Endothelial cell of umbilical vein (primary cell): ENCODE measurements at regions of chr1 and their contacts with region 1.

Region 1: DNA sequence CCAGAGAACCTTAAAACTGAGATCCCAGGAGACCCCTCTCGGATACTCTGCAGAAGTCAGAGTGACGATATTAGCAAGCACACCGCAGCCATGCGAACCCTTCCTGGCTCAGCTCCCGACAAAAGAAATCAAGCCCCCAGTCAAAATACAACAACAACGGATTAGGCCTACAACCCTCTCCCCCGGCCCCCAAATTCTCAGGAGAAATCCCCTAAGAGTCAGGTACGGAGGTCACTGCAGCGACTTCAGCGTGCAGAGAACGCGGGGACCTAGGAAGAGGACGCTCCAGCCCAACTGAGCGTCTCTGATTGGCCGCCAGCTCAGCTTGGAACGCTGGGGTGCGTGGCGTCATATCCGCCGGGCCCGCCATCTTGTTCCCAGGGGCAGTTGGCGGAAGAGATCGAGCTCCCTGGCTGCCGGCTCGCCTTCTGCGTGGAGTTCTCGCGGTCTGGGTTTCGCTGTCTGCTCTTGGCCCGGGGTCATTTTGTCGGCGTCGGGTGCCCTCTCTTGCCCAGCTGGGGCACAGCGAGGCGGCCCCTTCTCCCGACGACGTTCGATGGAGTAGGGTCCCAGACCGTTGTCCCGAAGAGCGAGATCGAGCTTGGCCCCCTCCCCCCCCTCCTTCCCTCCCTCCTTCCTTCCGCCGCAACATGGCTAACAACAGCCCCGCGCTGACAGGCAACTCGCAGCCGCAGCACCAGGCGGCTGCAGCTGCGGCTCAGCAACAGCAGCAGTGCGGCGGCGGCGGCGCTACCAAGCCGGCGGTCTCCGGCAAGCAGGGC is at the start of gene PRPF38B:
- DNase-seq: peak; percentile 93
- H3K4me3 ChIP-seq: peak within 1 kb of the TSS; percentile 83 to 94 (median 89)
- H3K27ac ChIP-seq: peak within 1 kb of the TSS; percentile 94
- H3K4me1 ChIP-seq: peaks cover 23% of the 10 kb centered on the region
- H3K27me3 ChIP-seq: no peaks in the 10 kb centered on the region
- CTCF ChIP-seq: no peak
- POLR2A ChIP-seq: peak; percentile 97
- total RNA-seq, gene PRPF38B: 40.5 and 46.6 TPM in 2 replicates

Region 2: GRCh38 chr1:108314815-108315214 is 377.3 kb before region 1 on chr1:
- CTCF ChIA-PET with region 1: no interaction called
- POLR2A ChIA-PET with region 1: no interaction called
- dilution Hi-C with region 1: no loop called
- intact Hi-C with region 1: no loop called
- DNase-seq: no peak
- H3K4me3 ChIP-seq: no peak overlapping the region
- H3K27ac ChIP-seq: no peak overlapping the region
- H3K4me1 ChIP-seq: no peaks in the 10 kb centered on the region
- H3K27me3 ChIP-seq: peaks cover 0 to 4% of the 10 kb centered on the region in 2 experiments
- CTCF ChIP-seq: no peak
- POLR2A ChIP-seq: no peak

Region 3: DNA sequence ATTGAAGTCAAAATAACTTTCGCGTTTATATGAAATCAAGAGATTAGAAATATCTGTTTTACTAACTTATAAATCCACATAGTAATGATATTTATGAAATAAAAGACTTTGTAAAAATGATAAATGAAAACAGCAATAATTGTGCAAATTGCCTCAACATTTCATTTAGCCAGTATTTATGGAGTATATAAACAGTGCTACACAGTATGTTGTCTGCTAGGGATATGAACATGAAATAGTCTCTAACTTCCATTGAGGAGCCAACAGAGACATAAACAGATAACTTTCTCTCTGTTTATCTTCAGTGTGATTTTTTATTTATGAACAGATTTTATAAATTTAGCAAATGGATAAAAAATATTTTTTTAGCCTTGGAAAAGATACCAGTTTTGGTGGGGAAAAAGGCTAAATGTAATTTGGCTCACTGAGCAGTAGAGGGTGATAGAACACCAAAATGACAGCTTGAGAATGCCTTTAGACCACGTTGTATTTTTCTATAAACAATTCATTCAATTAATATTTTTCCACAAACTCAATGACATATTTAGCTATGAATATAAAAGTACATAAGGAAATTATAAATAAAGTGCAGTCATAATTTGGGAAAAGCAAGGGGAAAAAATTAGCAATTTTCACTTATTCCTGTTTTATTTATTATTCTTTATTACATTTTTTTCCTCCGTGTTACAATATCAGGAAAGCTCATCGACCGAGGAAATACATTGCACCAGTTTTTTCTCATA is 179.7 kb before region 1 on chr1:
- CTCF ChIA-PET with region 1: interaction called, 7 read pairs
- POLR2A ChIA-PET with region 1: no interaction called
- dilution Hi-C with region 1: no loop called
- intact Hi-C with region 1: loop called (anchors 5 kb)
- DNase-seq: peak; percentile 39
- H3K4me3 ChIP-seq: no peak overlapping the region
- H3K27ac ChIP-seq: no peak overlapping the region
- H3K4me1 ChIP-seq: no peaks in the 10 kb centered on the region
- H3K27me3 ChIP-seq: peaks cover 2 to 9% of the 10 kb centered on the region in 2 experiments
- CTCF ChIP-seq: peak; percentile 43 to 53
- POLR2A ChIP-seq: no peak

Region 4: GRCh38 chr1:108590957-108591356 is 101.2 kb before region 1 on chr1:
- CTCF ChIA-PET with region 1: interaction called, 3 read pairs
- POLR2A ChIA-PET with region 1: no interaction called
- dilution Hi-C with region 1: no loop called
- intact Hi-C with region 1: loop called (anchors 2 kb)
- DNase-seq: peak; percentile 97
- H3K4me3 ChIP-seq: peak overlapping the region in 1 of 3 experiments; percentile 31
- H3K27ac ChIP-seq: peak overlapping the region; percentile 94
- H3K4me1 ChIP-seq: peaks cover 39% of the 10 kb centered on the region
- H3K27me3 ChIP-seq: no peaks in the 10 kb centered on the region
- CTCF ChIP-seq: no peak
- POLR2A ChIP-seq: no peak

Region 5: DNA sequence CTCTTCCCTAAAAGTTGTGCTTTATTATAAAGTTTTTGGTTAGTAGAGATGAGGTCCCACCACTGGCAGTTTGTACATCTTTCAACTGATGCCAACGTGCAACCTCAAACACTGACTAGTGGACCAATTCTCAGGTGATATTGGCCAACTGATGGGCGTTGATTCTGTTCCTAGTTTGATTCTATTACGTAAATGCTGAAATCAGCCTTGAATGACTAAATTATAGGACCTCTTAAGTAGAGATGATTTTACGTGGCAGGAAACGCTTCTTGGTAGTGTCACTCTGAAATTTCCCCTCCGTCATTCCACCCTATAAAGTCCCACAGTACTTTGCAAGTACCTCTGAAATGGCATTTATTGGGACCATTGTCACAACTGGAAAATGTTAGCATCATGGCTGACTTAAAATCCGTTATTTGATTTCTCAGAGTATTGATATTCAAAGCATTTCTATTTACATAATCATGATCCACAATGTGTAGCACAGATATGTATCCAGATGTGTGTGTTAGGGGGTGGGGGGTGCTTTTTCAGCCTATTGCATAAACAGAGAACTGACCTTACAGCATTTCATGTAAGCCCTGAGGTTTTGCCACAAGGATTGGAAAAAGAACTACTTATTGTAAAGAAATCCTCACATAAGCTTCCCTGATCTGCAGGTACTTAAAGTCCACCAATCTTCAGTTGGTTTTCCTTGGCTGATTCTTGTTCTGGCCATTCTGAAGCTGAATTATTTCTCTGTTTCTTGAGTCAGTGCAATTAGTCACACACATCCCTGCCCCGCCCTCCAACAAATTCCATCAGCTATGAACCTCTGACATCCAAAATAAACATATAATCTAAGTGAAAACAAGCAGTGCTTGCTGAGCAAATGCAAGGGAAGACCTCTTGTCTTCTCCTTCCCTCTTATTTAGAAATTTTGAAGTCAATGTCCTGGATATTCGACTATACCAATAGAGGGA is 12.1 kb after region 1 on chr1:
- CTCF ChIA-PET with region 1: interaction called, 6 read pairs
- POLR2A ChIA-PET with region 1: interaction called, 8 read pairs
- dilution Hi-C with region 1: no loop called
- intact Hi-C with region 1: loop called (anchors 1 kb)
- DNase-seq: peak; percentile 66
- H3K4me3 ChIP-seq: no peak overlapping the region
- H3K27ac ChIP-seq: no peak overlapping the region
- H3K4me1 ChIP-seq: peaks cover 12% of the 10 kb centered on the region
- H3K27me3 ChIP-seq: no peaks in the 10 kb centered on the region
- CTCF ChIP-seq: no peak
- POLR2A ChIP-seq: no peak

Region 6: GRCh38 chr1:108816049-108816893 is 124.1 kb after region 1 on chr1:
- CTCF ChIA-PET with region 1: no interaction called
- POLR2A ChIA-PET with region 1: no interaction called
- dilution Hi-C with region 1: no loop called
- intact Hi-C with region 1: loop called (anchors 2 kb)
- DNase-seq: peak; percentile 98
- H3K4me3 ChIP-seq: peak overlapping the region in 1 of 3 experiments; percentile 17
- H3K27ac ChIP-seq: peak overlapping the region; percentile 91
- H3K4me1 ChIP-seq: peaks cover 12% of the 10 kb centered on the region
- H3K27me3 ChIP-seq: no peaks in the 10 kb centered on the region
- CTCF ChIP-seq: no peak
- POLR2A ChIP-seq: peak; percentile 42

Region 7: DNA sequence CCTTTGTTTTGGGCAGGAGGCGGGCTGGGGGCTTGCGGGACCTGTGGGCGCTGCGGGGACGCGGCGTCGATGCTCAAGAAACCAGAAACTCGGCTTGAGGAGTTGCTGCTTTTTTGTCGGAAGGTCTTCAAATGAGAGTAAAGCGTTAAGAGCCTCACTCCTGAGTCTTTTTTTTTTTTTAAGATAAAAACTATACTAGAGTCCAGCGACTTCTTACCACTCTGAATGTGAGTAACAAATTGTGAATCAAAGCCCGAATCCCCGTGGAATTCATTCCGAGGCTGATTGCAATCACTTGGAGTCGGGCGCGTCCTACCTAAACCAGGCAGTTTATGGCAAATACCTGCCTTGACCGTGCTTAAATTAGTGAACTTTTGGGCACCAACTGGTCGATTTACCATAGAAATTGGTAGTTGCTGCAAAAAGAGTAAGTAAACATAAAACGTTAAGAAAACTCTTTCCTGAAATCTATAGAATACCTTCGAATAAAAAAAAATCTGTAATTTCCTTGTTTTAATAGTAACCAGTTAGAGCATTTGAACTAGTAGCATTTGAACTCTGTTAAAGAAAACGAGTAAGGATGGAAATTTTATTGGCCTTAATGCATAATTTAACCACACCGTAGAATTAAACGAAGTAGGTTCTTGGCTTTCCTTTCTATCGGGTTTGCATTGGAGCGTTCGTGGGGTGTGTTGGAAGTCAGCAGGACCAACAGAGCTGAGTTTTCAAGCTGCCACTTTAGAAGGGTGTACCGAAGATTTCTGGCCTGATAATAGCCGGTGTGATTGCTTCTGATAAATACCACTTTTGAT is 185.4 kb after region 1 on chr1:
- CTCF ChIA-PET with region 1: no interaction called
- POLR2A ChIA-PET with region 1: no interaction called
- dilution Hi-C with region 1: no loop called
- intact Hi-C with region 1: loop called (anchors 5 kb)
- DNase-seq: peak; percentile 55
- H3K4me3 ChIP-seq: peak overlapping the region; percentile 90 to 99 (median 93)
- H3K27ac ChIP-seq: peak overlapping the region; percentile 13
- H3K4me1 ChIP-seq: peaks cover 11% of the 10 kb centered on the region
- H3K27me3 ChIP-seq: no peaks in the 10 kb centered on the region
- CTCF ChIP-seq: no peak
- POLR2A ChIP-seq: no peak

Region 8: DNA sequence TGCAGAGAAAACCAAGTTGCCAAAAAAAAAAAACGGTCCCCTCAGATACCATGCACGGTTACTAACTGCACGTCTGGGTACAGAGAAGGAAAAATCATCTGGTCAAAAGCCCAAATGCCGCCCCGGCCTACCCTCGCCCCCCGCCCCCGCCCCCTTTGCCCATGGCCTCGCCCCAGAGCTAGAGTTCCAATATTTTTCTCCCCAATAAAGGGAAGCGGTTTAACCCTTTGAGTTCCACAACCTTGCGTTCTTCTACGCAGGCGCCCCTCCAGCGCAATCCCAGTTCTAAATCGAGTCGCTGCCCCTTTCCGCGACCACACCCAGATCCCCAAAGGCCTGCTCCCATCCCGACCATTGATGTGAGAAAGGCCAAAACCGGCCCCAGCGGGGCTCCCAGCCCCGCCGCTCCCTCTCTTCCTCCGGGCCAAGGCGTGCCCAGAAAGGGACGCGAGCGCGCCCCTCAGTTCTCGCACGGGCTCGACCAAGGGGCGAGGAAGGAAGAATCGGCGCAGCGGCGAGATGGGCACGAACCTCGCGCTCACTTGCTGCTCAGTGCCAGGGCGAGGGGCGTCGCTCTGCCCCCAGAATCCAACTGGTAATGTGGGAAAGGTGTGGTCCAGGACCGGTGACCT is 349.0 kb after region 1 on chr1:
- CTCF ChIA-PET with region 1: no interaction called
- POLR2A ChIA-PET with region 1: no interaction called
- dilution Hi-C with region 1: no loop called
- intact Hi-C with region 1: no loop called
- DNase-seq: peak; percentile 33
- H3K4me3 ChIP-seq: peak overlapping the region; percentile 92 to 96 (median 94)
- H3K27ac ChIP-seq: peak overlapping the region; percentile 38
- H3K4me1 ChIP-seq: peaks cover 10% of the 10 kb centered on the region
- H3K27me3 ChIP-seq: no peaks in the 10 kb centered on the region
- CTCF ChIP-seq: no peak
- POLR2A ChIP-seq: no peak